Caco-2 (cell line): ENCODE measurements at regions of chr10 and their contacts with region 1.

Region 1: GRCh38 chr10:80078448-80079311 is at the start of gene TMEM254:
- DNase-seq: peak; percentile 95 to 96
- H3K4me3 ChIP-seq: peak within 1 kb of the TSS; percentile 51
- H3K4me3 Mint-ChIP-seq: peak within 1 kb of the TSS; percentile 89
- H3K27ac Mint-ChIP-seq: peak within 1 kb of the TSS; percentile 95
- H3K4me1 ChIP-seq: peaks cover 45% of the 10 kb centered on the region
- H3K4me1 Mint-ChIP-seq: peaks cover 55% of the 10 kb centered on the region
- H3K27me3 ChIP-seq: no peaks in the 10 kb centered on the region
- H3K27me3 Mint-ChIP-seq: no peaks in the 10 kb centered on the region
- CTCF ChIP-seq: no peak
- total RNA-seq, gene TMEM254: 24.0 and 27.4 TPM in 2 replicates

Region 2: GRCh38 chr10:79904671-79905321 is 173.9 kb before region 1 on chr10:
- CTCF ChIA-PET with region 1: no interaction called
- POLR2A ChIA-PET with region 1: no interaction called
- intact Hi-C with region 1: no loop called
- DNase-seq: peak in 1 of 2 experiments; percentile 34
- H3K4me3 ChIP-seq: peak overlapping the region; percentile 32
- H3K4me3 Mint-ChIP-seq: peak overlapping the region; percentile 76
- H3K27ac Mint-ChIP-seq: no peak overlapping the region
- H3K4me1 ChIP-seq: no peaks in the 10 kb centered on the region
- H3K4me1 Mint-ChIP-seq: no peaks in the 10 kb centered on the region
- H3K27me3 ChIP-seq: no peaks in the 10 kb centered on the region; the same call in 1 of the 2 replicates
- H3K27me3 Mint-ChIP-seq: peaks cover 16% of the 10 kb centered on the region
- CTCF ChIP-seq: no peak

Region 3: DNA sequence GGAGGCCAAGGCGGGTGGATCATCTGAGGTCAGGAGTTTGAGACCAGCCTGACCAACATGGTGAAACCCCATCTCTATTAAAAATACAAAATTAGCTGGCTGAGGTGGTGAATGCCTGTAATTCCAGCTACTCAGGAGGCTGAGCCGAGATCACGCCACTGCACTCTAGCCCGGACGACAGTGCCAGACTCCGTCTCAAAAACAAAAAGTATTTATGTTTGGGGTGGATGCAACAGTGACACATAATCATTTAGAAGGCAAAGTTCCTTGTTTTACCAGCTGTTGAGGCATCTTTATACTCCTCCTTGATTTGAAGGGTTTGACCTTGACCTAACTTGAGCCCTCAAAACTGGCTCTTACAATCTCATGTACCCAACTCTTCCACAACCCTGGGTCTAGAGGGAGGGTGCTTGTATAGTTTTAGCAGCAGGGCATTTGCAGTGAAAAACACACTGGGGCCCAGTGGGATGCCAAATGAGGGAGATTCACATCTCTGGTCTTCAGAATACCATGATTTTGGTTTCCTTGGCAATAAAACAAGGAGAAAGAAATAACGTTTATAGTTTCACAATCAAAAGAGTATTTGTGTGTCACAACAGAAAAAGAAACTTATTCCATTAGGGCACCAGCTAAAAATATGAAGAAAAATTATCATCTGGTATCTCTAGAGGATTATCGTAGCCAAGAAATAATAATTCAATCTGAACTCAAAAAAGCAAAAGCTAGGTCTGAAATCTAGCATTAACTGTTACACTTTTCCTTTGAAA is 14.4 kb before region 1 on chr10:
- CTCF ChIA-PET with region 1: interaction called, 4 read pairs
- POLR2A ChIA-PET with region 1: interaction called, 8 read pairs
- intact Hi-C with region 1: loop called (anchors 1 kb)
- DNase-seq: no peak
- H3K4me3 ChIP-seq: no peak overlapping the region
- H3K4me3 Mint-ChIP-seq: no peak overlapping the region
- H3K27ac Mint-ChIP-seq: no peak overlapping the region
- H3K4me1 ChIP-seq: peaks cover 20% of the 10 kb centered on the region
- H3K4me1 Mint-ChIP-seq: peaks cover 17% of the 10 kb centered on the region
- H3K27me3 ChIP-seq: no peaks in the 10 kb centered on the region
- H3K27me3 Mint-ChIP-seq: no peaks in the 10 kb centered on the region
- CTCF ChIP-seq: no peak

Region 4: DNA sequence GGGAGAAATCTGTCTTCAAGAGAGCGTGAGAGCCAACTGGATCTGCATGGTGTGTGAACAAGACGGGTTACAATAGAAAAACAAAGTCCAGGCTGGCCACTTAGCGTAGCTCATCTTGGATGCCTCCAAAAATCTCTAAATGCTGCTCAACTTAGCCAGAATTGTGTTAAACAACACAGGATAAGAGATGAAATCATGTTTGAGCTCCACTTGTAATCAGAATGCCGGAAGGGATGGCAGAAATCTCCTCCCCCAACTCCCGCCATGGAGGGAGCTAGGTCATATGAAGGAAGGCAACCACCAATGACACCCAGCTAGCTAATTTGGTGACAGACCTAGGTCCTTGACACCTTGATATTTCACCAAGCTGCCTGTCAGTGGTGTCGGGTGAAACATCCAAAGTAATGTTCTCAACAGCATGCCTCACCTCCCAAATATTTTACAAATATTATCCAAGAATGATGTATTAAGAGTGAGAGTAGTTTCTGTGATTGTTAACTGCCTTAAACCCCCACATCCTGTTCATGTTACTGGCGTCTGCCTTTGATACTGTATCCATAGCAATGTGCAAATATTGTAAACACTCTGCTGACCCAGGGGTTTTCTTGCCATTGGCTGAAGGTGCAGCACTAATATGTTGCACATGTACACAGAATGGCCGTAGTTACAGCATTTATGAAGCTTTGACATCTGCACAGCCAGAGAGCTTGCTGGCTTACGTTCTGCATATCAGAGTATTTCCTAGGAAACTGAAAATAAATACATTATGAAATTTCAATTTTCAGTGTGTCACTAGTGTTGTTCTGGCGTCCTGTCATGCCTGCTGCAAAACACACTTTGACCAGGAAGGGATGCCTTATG is 25.6 kb after region 1 on chr10:
- CTCF ChIA-PET with region 1: no interaction called
- POLR2A ChIA-PET with region 1: no interaction called
- intact Hi-C with region 1: loop called (anchors 2 kb)
- DNase-seq: peak in 1 of 2 experiments; percentile 20
- H3K4me3 ChIP-seq: no peak overlapping the region
- H3K4me3 Mint-ChIP-seq: no peak overlapping the region
- H3K27ac Mint-ChIP-seq: no peak overlapping the region
- H3K4me1 ChIP-seq: peaks cover 5% of the 10 kb centered on the region; the same call in 1 of the 2 replicates
- H3K4me1 Mint-ChIP-seq: peaks cover 16% of the 10 kb centered on the region
- H3K27me3 ChIP-seq: no peaks in the 10 kb centered on the region
- H3K27me3 Mint-ChIP-seq: no peaks in the 10 kb centered on the region
- CTCF ChIP-seq: no peak

Region 5: GRCh38 chr10:80205478-80206276 is 127.0 kb after region 1 on chr10 and contains the start of gene ANXA11:
- CTCF ChIA-PET with region 1: no interaction called
- POLR2A ChIA-PET with region 1: interaction called, 9 read pairs
- intact Hi-C with region 1: loop called (anchors 5 kb)
- DNase-seq: peak; percentile 89 to 90
- H3K4me3 ChIP-seq: peak within 1 kb of the TSS; percentile 84
- H3K4me3 Mint-ChIP-seq: peak within 1 kb of the TSS; percentile 78
- H3K27ac Mint-ChIP-seq: peak within 1 kb of the TSS; percentile 100
- H3K4me1 ChIP-seq: peaks cover 48% of the 10 kb centered on the region
- H3K4me1 Mint-ChIP-seq: peaks cover 61% of the 10 kb centered on the region
- H3K27me3 ChIP-seq: no peaks in the 10 kb centered on the region
- H3K27me3 Mint-ChIP-seq: no peaks in the 10 kb centered on the region
- CTCF ChIP-seq: peak in 1 of 2 experiments; percentile 3
- total RNA-seq, gene ANXA11: 316 and 327 TPM in 2 replicates